ENCODE measurements at regions of chr17 and their contacts with region 1.

Region 1: GRCh38 chr17:35312790-35313711 is 60.4 kb downstream of the SLFN11 start:
- DNase-seq: peak; percentile 37 to 51
- H3K4me3 ChIP-seq: peak overlapping the region; percentile 10 to 11
- H3K27ac ChIP-seq: peak overlapping the region; percentile 37 to 61
- H3K4me1 ChIP-seq: no peaks in the 10 kb centered on the region
- H3K27me3 ChIP-seq: no peaks in the 10 kb centered on the region
- CTCF ChIP-seq: peak; percentile 71 to 85 (median 76)
- POLR2A ChIP-seq: no peak

Region 2: GRCh38 chr17:35537601-35538141 is 224.6 kb after region 1 on chr17 and contains the start of gene SLFN12L:
- intact Hi-C with region 1: loop called (anchors 5 kb)
- DNase-seq: no peak
- H3K4me3 ChIP-seq: no peak within 1 kb of the TSS
- H3K27ac ChIP-seq: peak within 1 kb of the TSS; percentile 48 to 57
- H3K4me1 ChIP-seq: no peaks in the 10 kb centered on the region
- H3K27me3 ChIP-seq: no peaks in the 10 kb centered on the region
- CTCF ChIP-seq: no peak
- POLR2A ChIP-seq: no peak
- total RNA-seq, gene SLFN12L: 0.55 to 2.8 (median 1.4) TPM

Region 3: GRCh38 chr17:35747540-35748017 is 434.5 kb after region 1 on chr17:
- intact Hi-C with region 1: loop called (anchors 5 kb)
- DNase-seq: peak; percentile 73 to 74
- H3K4me3 ChIP-seq: no peak overlapping the region
- H3K27ac ChIP-seq: no peak overlapping the region
- H3K4me1 ChIP-seq: peaks cover 0 to 4% of the 10 kb centered on the region in 2 donors
- H3K27me3 ChIP-seq: peaks cover 8 to 15% of the 10 kb centered on the region in 2 donors
- CTCF ChIP-seq: peak; percentile 85 to 91 (median 87)
- POLR2A ChIP-seq: no peak